CD4-positive, alpha-beta memory T cell (primary cell): ENCODE measurements at regions of chr18 and their contacts with region 1.

Region 1: DNA sequence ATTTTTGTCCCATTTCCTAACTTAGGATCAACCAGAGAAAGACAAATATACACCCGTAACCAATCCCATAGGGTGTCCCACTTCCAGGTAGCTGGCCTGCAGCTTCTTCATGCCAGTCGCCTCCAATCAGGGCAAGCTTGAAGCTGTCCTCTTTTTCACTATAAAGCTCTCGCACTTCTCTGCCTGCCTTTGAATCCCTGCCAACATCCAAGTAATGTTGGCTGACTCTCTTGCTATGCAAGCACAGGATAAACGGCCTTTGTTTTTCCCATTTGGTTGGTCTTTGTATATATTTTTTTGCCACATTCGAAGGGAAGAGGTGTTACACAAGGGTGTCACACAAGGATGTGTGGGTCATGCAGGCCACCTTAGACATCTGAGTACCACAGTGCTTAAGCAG is 388.8 kb downstream of the CBLN2 start:
- DNase-seq: no peak
- H3K4me3 ChIP-seq: no peak overlapping the region
- H3K4me3 Mint-ChIP-seq: no peak overlapping the region
- H3K27ac ChIP-seq: no peak overlapping the region
- H3K27ac Mint-ChIP-seq: no peak overlapping the region
- H3K4me1 ChIP-seq: no peaks in the 10 kb centered on the region
- H3K4me1 Mint-ChIP-seq: no peaks in the 10 kb centered on the region
- H3K27me3 ChIP-seq: no peaks in the 10 kb centered on the region
- H3K27me3 Mint-ChIP-seq: no peaks in the 10 kb centered on the region

Region 2: GRCh38 chr18:72056171-72056570 is 99.2 kb before region 1 on chr18:
- CTCF ChIA-PET with region 1: no interaction called
- POLR2A ChIA-PET with region 1: no interaction called
- intact Hi-C with region 1: no loop called
- DNase-seq: no peak
- H3K4me3 ChIP-seq: no peak overlapping the region
- H3K4me3 Mint-ChIP-seq: no peak overlapping the region
- H3K27ac ChIP-seq: no peak overlapping the region
- H3K27ac Mint-ChIP-seq: no peak overlapping the region
- H3K4me1 ChIP-seq: no peaks in the 10 kb centered on the region
- H3K4me1 Mint-ChIP-seq: no peaks in the 10 kb centered on the region
- H3K27me3 ChIP-seq: no peaks in the 10 kb centered on the region
- H3K27me3 Mint-ChIP-seq: no peaks in the 10 kb centered on the region

Region 3: DNA sequence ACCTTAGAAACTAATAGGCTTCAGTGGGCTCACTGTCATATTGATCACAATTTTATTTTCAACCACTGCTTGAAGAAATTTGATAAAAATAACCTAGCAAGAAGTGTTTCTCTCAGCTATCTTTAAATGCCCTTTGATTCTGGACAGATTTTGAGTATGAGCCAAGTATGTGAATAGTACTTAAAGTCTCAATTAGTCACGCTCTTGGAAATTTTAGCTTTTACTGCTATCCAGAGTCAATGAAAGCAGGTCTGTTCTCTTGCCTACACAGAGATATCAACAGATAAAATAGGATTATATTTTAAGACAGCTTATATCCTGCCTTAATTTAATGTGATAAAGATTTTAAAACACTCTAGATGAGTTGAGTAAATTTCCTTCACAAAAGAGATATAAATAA is 51.5 kb after region 1 on chr18:
- CTCF ChIA-PET with region 1: no interaction called
- POLR2A ChIA-PET with region 1: no interaction called
- intact Hi-C with region 1: loop called (anchors 10 kb)
- DNase-seq: no peak
- H3K4me3 ChIP-seq: no peak overlapping the region
- H3K4me3 Mint-ChIP-seq: no peak overlapping the region
- H3K27ac ChIP-seq: no peak overlapping the region
- H3K27ac Mint-ChIP-seq: no peak overlapping the region
- H3K4me1 ChIP-seq: no peaks in the 10 kb centered on the region
- H3K4me1 Mint-ChIP-seq: no peaks in the 10 kb centered on the region
- H3K27me3 ChIP-seq: no peaks in the 10 kb centered on the region
- H3K27me3 Mint-ChIP-seq: no peaks in the 10 kb centered on the region

Region 4: GRCh38 chr18:72727038-72727655 is 571.8 kb after region 1 on chr18:
- CTCF ChIA-PET with region 1: no interaction called
- POLR2A ChIA-PET with region 1: no interaction called
- intact Hi-C with region 1: no loop called
- DNase-seq: no peak
- H3K4me3 ChIP-seq: no peak overlapping the region
- H3K4me3 Mint-ChIP-seq: no peak overlapping the region
- H3K27ac ChIP-seq: no peak overlapping the region
- H3K27ac Mint-ChIP-seq: no peak overlapping the region
- H3K4me1 ChIP-seq: no peaks in the 10 kb centered on the region
- H3K4me1 Mint-ChIP-seq: no peaks in the 10 kb centered on the region
- H3K27me3 ChIP-seq: no peaks in the 10 kb centered on the region
- H3K27me3 Mint-ChIP-seq: no peaks in the 10 kb centered on the region